MCF 10A (cell line): ENCODE measurements at regions of chr4 and their contacts with region 1.

Region 1: DNA sequence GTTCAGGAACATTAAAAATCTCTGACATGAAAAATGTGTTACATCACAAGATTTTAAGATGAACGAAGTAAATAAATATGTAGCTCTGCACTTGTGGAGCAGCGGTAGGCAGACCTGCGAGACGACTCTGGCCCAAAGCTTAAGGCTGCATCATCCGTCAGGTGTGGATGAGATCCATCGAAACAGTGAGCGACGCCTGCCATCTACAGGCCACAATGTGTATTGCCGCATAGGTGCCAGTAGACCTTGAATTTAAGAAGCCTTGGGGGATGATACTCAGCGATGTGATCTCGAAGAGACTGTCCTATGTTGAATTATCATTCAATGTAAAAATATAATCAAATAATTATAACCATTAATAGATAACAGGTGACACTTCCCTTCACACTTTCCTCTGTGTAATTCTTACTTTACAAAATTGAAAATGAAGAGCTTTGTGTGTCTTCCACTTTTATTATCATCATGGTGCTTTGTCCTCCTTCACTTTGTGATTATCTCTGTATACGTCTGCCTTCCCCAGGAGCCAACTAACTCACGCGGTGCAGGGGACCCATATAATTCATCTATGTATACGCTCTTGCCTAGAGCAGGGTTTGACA is 851.0 kb downstream of the RAB28 start:
- DNase-seq: peak; percentile 85
- H3K4me3 Mint-ChIP-seq: no peak overlapping the region
- H3K27ac Mint-ChIP-seq: no peak overlapping the region
- H3K4me1 Mint-ChIP-seq: no peaks in the 10 kb centered on the region
- H3K27me3 Mint-ChIP-seq: no peaks in the 10 kb centered on the region
- CTCF ChIP-seq: peak; percentile 87

Region 2: DNA sequence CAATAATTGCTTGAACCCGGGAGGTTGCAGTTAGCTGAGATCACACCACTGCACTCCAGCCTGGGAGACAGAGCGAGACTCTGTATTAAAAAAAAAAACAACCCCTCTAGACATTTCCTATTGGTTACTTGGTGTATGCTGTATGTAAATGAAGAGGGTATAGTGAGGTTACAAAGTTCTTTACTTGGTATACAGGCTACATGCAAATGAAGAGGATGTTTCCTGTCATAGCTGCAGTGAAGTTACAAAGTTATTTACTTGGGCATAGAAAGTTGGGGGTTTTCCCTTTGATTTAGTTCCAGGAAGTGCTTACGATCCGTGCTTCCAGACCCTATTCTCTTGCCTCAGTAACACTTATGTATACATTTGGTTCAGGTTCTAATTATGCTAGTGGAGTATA is 1910.2 kb before region 1 on chr4:
- CTCF ChIA-PET with region 1: no interaction called
- POLR2A ChIA-PET with region 1: no interaction called
- intact Hi-C with region 1: no loop called
- DNase-seq: no peak
- H3K4me3 Mint-ChIP-seq: no peak overlapping the region
- H3K27ac Mint-ChIP-seq: no peak overlapping the region
- H3K4me1 Mint-ChIP-seq: no peaks in the 10 kb centered on the region
- H3K27me3 Mint-ChIP-seq: no peaks in the 10 kb centered on the region
- CTCF ChIP-seq: no peak

Region 3: GRCh38 chr4:11805842-11806241 is 827.3 kb before region 1 on chr4:
- CTCF ChIA-PET with region 1: interaction called, 7 read pairs
- POLR2A ChIA-PET with region 1: no interaction called
- intact Hi-C with region 1: loop called (anchors 1 kb)
- DNase-seq: peak; percentile 61
- H3K4me3 Mint-ChIP-seq: no peak overlapping the region
- H3K27ac Mint-ChIP-seq: no peak overlapping the region
- H3K4me1 Mint-ChIP-seq: no peaks in the 10 kb centered on the region
- H3K27me3 Mint-ChIP-seq: no peaks in the 10 kb centered on the region
- CTCF ChIP-seq: peak; percentile 64

Region 4: GRCh38 chr4:12041828-12042227 is 591.3 kb before region 1 on chr4:
- CTCF ChIA-PET with region 1: interaction called, 4 read pairs
- POLR2A ChIA-PET with region 1: no interaction called
- intact Hi-C with region 1: loop called (anchors 2 kb)
- DNase-seq: peak; percentile 23
- H3K4me3 Mint-ChIP-seq: no peak overlapping the region
- H3K27ac Mint-ChIP-seq: no peak overlapping the region
- H3K4me1 Mint-ChIP-seq: no peaks in the 10 kb centered on the region
- H3K27me3 Mint-ChIP-seq: no peaks in the 10 kb centered on the region
- CTCF ChIP-seq: no peak

Region 5: GRCh38 chr4:12488672-12489071 is 144.5 kb before region 1 on chr4:
- CTCF ChIA-PET with region 1: no interaction called
- POLR2A ChIA-PET with region 1: no interaction called
- intact Hi-C with region 1: loop called (anchors 10 kb)
- DNase-seq: no peak
- H3K4me3 Mint-ChIP-seq: no peak overlapping the region
- H3K27ac Mint-ChIP-seq: no peak overlapping the region
- H3K4me1 Mint-ChIP-seq: no peaks in the 10 kb centered on the region
- H3K27me3 Mint-ChIP-seq: no peaks in the 10 kb centered on the region
- CTCF ChIP-seq: no peak

Region 6: GRCh38 chr4:12545813-12546212 is 87.3 kb before region 1 on chr4:
- CTCF ChIA-PET with region 1: no interaction called
- POLR2A ChIA-PET with region 1: no interaction called
- intact Hi-C with region 1: no loop called
- DNase-seq: no peak
- H3K4me3 Mint-ChIP-seq: no peak overlapping the region
- H3K27ac Mint-ChIP-seq: no peak overlapping the region
- H3K4me1 Mint-ChIP-seq: no peaks in the 10 kb centered on the region
- H3K27me3 Mint-ChIP-seq: no peaks in the 10 kb centered on the region
- CTCF ChIP-seq: no peak

Region 7: DNA sequence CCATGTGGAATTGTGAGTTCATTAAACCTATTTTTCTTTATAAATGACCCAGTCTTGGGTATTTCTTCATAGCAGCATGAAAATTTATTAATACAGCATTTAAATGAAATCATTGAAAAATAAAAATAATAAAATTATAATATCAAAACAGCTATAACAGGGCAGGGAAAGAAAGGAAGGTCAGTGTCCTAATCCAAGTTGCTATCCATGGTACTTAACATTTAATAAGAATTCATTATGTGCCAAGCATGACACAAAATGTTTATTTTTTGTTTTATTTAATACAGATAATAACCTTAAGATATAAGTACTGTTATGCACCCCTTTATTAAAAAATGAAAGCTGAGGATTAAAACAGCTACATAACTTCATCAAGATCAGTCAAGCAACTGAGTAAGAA is 12.6 kb after region 1 on chr4:
- CTCF ChIA-PET with region 1: interaction called, 11 read pairs
- POLR2A ChIA-PET with region 1: no interaction called
- intact Hi-C with region 1: no loop called
- DNase-seq: no peak
- H3K4me3 Mint-ChIP-seq: no peak overlapping the region
- H3K27ac Mint-ChIP-seq: no peak overlapping the region
- H3K4me1 Mint-ChIP-seq: peaks cover 11% of the 10 kb centered on the region
- H3K27me3 Mint-ChIP-seq: no peaks in the 10 kb centered on the region
- CTCF ChIP-seq: no peak

Region 8: GRCh38 chr4:12791536-12791935 is 158.4 kb after region 1 on chr4:
- CTCF ChIA-PET with region 1: no interaction called
- POLR2A ChIA-PET with region 1: no interaction called
- intact Hi-C with region 1: no loop called
- DNase-seq: no peak
- H3K4me3 Mint-ChIP-seq: no peak overlapping the region
- H3K27ac Mint-ChIP-seq: no peak overlapping the region
- H3K4me1 Mint-ChIP-seq: no peaks in the 10 kb centered on the region
- H3K27me3 Mint-ChIP-seq: no peaks in the 10 kb centered on the region
- CTCF ChIP-seq: no peak